ENCODE measurements at regions of chr6 and their contacts with region 1.

Region 1: GRCh38 chr6:16494793-16495192 is 256.4 kb downstream of the GMPR start:
- DNase-seq: no peak
- ATAC-seq: no peak
- H3K4me3 ChIP-seq: no peak overlapping the region
- H3K27ac ChIP-seq: no peak overlapping the region
- H3K4me1 ChIP-seq: peaks cover 0 to 9% of the 10 kb centered on the region in 2 donors
- H3K27me3 ChIP-seq: no peaks in the 10 kb centered on the region

Region 2: DNA sequence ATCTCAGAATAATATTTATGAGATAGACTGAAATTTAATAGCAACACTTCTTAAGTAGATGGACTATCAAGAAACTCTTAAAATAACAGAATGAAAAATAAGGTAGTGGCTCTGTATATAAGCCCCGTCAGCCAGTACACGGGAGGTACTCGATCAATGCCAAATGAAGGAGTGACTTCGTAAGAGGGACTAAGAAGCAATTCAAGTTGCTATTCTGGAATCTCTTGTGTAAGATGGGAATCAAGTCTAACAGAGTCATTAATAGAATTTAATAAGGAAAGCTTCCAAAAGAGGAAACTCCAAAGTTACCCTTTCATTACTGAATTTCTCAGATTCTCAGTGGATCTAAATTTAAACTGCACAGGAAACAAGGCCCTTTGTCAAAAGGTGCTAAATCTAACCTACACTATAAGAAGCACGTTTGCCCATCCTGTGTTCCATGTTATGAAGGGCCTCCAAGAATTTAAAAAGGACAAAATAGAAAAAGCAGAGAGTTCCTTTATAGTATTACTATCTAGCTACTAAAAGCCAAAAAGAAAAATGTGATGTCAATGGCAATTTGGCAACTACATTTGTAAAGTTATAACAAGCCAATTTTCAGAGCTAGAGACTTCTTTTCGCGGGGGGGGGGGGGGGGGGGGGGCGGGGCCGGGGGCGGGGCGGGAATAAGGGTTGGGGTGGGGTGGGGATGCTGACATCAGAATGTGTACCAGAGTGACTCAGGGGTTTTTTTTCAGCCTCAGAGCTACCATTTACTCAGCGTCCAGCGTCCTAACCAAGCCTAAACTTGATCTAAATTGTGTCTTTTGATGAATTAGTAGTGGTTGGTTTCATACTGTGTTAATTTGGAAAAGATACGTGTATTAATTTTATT is 55.8 kb before region 1 on chr6:
- intact Hi-C with region 1: loop called in 1 of 2 experiments (anchors 2 kb)
- DNase-seq: no peak
- ATAC-seq: no peak
- H3K4me3 ChIP-seq: no peak overlapping the region
- H3K27ac ChIP-seq: no peak overlapping the region
- H3K4me1 ChIP-seq: peaks cover 0 to 8% of the 10 kb centered on the region in 2 donors
- H3K27me3 ChIP-seq: no peaks in the 10 kb centered on the region

Region 3: GRCh38 chr6:16523606-16524379 is 29.0 kb after region 1 on chr6:
- intact Hi-C with region 1: no loop called
- DNase-seq: no peak
- ATAC-seq: peak; percentile 48
- H3K4me3 ChIP-seq: no peak overlapping the region
- H3K27ac ChIP-seq: no peak overlapping the region
- H3K4me1 ChIP-seq: peaks cover 0 to 2% of the 10 kb centered on the region in 2 donors
- H3K27me3 ChIP-seq: no peaks in the 10 kb centered on the region

Region 4: DNA sequence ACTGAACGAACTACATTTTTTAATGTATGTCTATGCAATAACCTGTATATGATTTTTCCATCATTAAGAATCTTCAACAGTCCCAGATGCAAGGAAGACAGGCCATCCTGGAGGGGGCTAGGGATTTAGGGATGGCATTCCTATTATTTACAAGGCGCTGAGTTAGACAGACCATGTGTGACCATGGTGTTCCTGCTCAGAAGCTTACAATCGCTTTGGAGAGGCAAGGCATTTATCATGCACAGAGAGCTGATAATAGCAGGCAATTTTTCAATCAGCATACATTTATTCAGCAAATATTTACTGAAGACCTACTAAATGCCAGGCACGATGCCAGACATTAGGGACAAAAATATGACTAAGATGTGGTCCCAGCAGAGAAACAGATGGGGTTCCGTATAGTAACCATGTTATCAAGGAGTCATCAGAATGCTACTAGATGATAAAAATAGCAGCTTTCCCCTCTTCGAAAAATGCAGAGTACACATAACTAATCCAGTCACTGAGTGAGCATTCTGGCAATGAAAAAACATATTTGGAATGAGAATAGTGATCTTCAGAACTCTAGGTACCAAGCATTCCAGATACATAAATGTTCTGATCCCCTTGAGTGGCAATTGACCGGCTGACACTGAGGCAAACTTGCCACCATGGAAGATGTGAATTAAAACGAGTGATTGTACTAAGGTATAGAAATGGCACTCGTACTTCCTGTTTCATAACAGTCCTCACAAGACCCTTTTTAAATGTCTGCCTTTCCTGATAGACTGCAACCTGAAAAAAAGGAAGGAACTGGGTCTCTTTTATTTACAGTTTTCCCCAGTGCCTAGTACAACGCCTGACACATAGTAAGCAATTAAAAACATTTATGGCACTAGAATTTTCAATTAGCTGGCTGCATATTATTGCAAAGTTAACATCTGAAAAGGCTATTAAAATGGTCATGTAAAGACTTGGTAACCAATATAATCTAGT is 130.8 kb after region 1 on chr6:
- intact Hi-C with region 1: no loop called
- DNase-seq: no peak
- ATAC-seq: no peak
- H3K4me3 ChIP-seq: no peak overlapping the region
- H3K27ac ChIP-seq: no peak overlapping the region
- H3K4me1 ChIP-seq: peaks cover 0 to 3% of the 10 kb centered on the region in 2 donors
- H3K27me3 ChIP-seq: no peaks in the 10 kb centered on the region

Measured in aorta (tissue), 5 donors.